ENCODE measurements at regions of chr17 and their contacts with region 1.

Region 1: GRCh38 chr17:34398990-34399389 is 36.0 kb upstream of the CCL1 start:
- DNase-seq: no peak
- ATAC-seq: peak; percentile 91
- H3K4me3 Mint-ChIP-seq: no peak overlapping the region
- H3K27ac Mint-ChIP-seq: peak overlapping the region; percentile 81
- H3K4me1 Mint-ChIP-seq: peaks cover 44% of the 10 kb centered on the region
- H3K27me3 Mint-ChIP-seq: peaks cover 5% of the 10 kb centered on the region

Region 2: DNA sequence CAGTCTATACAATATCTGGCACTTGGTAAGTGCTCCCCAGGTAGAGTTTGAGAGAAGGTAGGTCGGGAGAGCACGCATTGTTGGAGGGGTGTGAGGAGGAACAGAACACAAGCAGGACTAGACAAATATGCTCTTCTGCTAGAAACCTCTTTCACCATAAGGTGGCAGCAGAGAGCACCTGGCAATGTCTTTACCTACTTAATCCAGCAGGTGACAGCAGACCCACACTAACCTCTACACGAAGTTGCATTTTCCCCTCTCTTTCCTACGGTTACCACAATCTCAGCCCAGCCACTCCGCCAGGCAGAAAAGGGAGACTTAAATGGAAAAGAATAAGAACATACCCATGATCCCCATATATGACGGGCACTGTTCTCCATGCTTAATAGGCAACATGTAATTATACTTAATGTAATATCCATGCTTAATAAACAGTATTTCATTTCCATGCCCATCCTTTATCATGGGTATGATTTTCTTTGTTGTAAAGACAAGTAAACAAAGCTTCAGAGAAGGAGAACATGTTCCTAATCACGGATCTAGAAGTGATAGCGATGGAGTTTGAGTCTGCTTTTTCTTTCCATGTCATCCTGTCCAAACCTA is 199.0 kb before region 1 on chr17:
- CTCF ChIA-PET with region 1: interaction called, 12 read pairs
- DNase-seq: peak; percentile 81
- ATAC-seq: peak; percentile 77
- H3K4me3 Mint-ChIP-seq: no peak overlapping the region
- H3K27ac Mint-ChIP-seq: no peak overlapping the region
- H3K4me1 Mint-ChIP-seq: peaks cover 27% of the 10 kb centered on the region
- H3K27me3 Mint-ChIP-seq: peaks cover 72% of the 10 kb centered on the region

Region 3: DNA sequence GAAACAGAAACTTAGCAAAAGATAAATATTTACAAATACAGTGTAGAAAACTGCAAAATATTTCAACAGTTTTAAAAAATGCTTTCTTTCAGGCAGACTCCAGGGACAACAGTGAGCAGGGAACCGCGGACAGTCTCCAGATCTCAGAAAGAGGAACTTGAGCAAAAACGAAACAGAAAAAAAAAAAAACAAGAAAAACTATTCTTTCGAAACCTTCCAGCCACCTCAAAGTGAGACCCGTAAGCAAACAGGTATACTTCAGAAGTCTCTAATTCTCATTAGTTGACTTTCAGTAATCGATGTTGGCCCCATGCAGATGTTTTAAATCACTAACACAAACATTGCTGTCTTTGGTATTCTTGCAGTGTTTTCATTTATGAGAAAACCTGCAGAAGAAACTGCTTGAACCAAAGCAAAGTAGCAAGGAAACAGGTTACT is 20.3 kb before region 1 on chr17:
- CTCF ChIA-PET with region 1: interaction called, 99 read pairs
- DNase-seq: peak; percentile 72
- ATAC-seq: peak; percentile 80
- H3K4me3 Mint-ChIP-seq: peak overlapping the region; percentile 63
- H3K27ac Mint-ChIP-seq: peak overlapping the region; percentile 85
- H3K4me1 Mint-ChIP-seq: peaks cover 68% of the 10 kb centered on the region
- H3K27me3 Mint-ChIP-seq: peaks cover 3% of the 10 kb centered on the region

Region 4: GRCh38 chr17:34386697-34387550 is 12.1 kb before region 1 on chr17:
- CTCF ChIA-PET with region 1: interaction called, 99 read pairs
- DNase-seq: peak; percentile 55
- ATAC-seq: peak; percentile 10
- H3K4me3 Mint-ChIP-seq: no peak overlapping the region
- H3K27ac Mint-ChIP-seq: peak overlapping the region; percentile 70
- H3K4me1 Mint-ChIP-seq: peaks cover 83% of the 10 kb centered on the region
- H3K27me3 Mint-ChIP-seq: peaks cover 3% of the 10 kb centered on the region

Region 5: DNA sequence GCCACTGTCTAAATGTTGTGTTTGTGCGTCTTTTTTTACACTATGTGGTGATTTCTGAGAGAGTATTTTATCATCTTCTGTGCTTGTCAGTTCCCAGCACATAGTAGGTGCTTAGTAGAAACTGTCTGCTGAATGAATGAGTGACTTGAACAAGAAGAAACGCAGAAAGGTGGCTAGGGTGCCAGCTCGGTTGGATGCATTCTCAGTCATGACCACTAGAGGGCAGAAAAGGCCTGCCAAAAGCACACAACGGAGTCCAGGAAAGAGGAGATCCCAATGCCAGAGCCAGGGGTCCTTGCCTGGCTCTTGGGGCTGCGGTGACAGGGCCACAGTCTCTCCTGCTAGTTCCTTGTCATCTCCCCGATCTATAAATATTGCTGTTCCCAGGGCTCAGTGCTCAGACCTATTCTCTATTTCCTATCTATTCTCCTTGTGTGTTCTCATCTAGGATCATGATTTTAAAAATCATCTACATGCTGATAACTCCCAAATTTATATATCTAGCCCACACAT is 21.3 kb after region 1 on chr17:
- CTCF ChIA-PET with region 1: interaction called, 17 read pairs
- DNase-seq: peak; percentile 75
- ATAC-seq: peak; percentile 45
- H3K4me3 Mint-ChIP-seq: no peak overlapping the region
- H3K27ac Mint-ChIP-seq: no peak overlapping the region
- H3K4me1 Mint-ChIP-seq: no peaks in the 10 kb centered on the region
- H3K27me3 Mint-ChIP-seq: peaks cover 60% of the 10 kb centered on the region